ENCODE measurements at regions of chr11 and their contacts with region 1.

Region 1: GRCh38 chr11:30561691-30562415 is 24.3 kb downstream of the MPPED2 start:
- DNase-seq: no peak
- H3K4me3 ChIP-seq: no peak overlapping the region
- H3K27ac ChIP-seq: peak overlapping the region; percentile 25 to 74
- H3K4me1 ChIP-seq: peaks cover 5 to 6% of the 10 kb centered on the region in 2 donors
- H3K27me3 ChIP-seq: no peaks in the 10 kb centered on the region
- CTCF ChIP-seq: no peak

Region 2: GRCh38 chr11:30478923-30479322 is 82.9 kb before region 1 on chr11:
- intact Hi-C with region 1: loop called (anchors 5 kb)
- DNase-seq: peak in 1 of 2 donors; percentile 73
- H3K4me3 ChIP-seq: peak overlapping the region in 1 of 2 donors; percentile 26
- H3K27ac ChIP-seq: peak overlapping the region; percentile 80
- H3K4me1 ChIP-seq: peaks cover 6 to 40% of the 10 kb centered on the region in 2 donors
- H3K27me3 ChIP-seq: no peaks in the 10 kb centered on the region
- CTCF ChIP-seq: no peak

Region 3: GRCh38 chr11:30631148-30631547 is 69.3 kb after region 1 on chr11:
- intact Hi-C with region 1: no loop called
- DNase-seq: no peak
- H3K4me3 ChIP-seq: no peak overlapping the region
- H3K27ac ChIP-seq: no peak overlapping the region
- H3K4me1 ChIP-seq: no peaks in the 10 kb centered on the region
- H3K27me3 ChIP-seq: no peaks in the 10 kb centered on the region
- CTCF ChIP-seq: no peak